ENCODE measurements at regions of chr5 and their contacts with region 1.

Region 1: DNA sequence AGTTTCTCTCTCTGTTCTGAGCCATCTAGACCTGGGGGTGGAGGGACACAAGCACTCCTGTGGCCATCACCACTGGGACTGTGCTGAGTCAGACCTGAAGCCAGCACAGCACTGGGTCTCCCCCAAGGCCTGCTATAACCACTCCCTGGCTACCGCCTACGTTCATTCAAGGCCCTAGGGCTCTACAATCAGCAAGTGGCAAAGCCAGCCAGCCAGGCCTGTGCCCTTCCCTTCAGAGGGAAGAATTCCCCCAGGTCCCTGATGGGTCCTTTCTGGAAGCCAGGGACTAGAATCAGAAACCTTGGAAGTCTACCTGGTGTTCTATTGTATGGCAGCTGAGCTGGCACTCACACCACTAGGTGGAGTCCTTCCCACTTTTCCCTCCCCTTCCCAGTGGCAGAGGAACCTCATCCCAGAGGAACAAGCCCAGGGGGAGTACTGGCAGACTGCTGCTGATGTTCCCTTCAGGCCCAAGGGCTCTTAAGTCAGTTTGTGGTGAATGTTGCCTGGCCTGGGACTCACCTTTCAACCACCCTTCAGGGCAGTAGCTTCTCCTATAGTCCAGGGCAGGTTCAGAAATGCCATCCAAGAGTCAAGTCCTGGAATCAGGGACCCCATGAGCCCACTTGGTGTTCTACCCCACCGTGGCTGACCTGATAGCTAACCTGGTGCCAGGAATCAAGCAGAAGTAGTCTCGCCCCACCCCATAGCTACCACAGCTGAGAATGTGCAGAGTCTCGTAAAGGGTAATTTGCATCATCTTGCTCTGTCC is 20.0 kb downstream of the JMY start:
- DNase-seq: peak; percentile 45
- ATAC-seq: peak; percentile 95
- H3K4me3 ChIP-seq: no peak overlapping the region
- H3K27ac ChIP-seq: no peak overlapping the region
- H3K4me1 ChIP-seq: peaks cover 35% of the 10 kb centered on the region
- H3K27me3 ChIP-seq: no peaks in the 10 kb centered on the region
- CTCF ChIP-seq: peak; percentile 88
- EP300 ChIP-seq: no peak
- POLR2A ChIP-seq: no peak
- RAD21 ChIP-seq: no peak

Region 2: GRCh38 chr5:79333852-79334557 is 78.0 kb after region 1 on chr5:
- CTCF ChIA-PET with region 1: no interaction called
- POLR2A ChIA-PET with region 1: no interaction called
- in situ Hi-C with region 1: no loop called
- intact Hi-C with region 1: loop called (anchors 5 kb)
- DNase-seq: peak; percentile 10
- ATAC-seq: peak; percentile 95
- H3K4me3 ChIP-seq: peak overlapping the region in 1 of 3 experiments; percentile 26; a peak in 2 of 6 replicates
- H3K27ac ChIP-seq: no peak overlapping the region
- H3K4me1 ChIP-seq: peaks cover 8% of the 10 kb centered on the region
- H3K27me3 ChIP-seq: no peaks in the 10 kb centered on the region
- CTCF ChIP-seq: peak; percentile 43
- EP300 ChIP-seq: no peak
- POLR2A ChIP-seq: no peak
- RAD21 ChIP-seq: 0 out of 2 replicates have a peak, but pooled peaks have one; percentile 20

Region 3: DNA sequence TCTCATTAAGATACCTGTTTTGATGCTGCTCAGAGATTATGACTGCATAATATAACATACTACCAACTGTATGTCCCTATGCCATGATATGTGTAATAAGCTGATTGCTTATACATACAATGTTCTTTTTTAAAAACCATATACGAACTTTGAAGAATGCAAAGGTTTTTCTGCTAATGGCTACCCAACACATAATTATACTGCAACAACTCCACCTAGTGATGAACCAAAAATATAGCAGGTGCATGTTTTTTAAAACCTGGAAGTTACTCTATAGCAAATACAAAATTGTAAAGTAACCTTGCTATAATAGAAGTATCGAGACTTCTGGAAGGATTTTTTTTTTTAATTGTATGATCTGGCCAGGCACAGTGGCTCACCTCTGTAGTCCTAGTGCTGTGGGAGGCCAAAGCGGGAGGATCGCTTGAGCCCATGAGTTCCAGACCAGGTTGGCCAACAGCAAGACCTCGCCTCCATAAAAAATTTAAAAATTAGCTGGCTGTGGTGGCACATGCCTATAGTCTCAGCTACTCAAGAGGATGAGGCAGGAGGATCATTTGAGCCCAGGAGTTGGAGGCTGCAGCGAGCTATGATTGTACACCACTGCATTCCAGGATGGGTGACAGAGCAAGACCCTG is 208.8 kb after region 1 on chr5:
- CTCF ChIA-PET with region 1: interaction called, 4 read pairs
- POLR2A ChIA-PET with region 1: no interaction called
- in situ Hi-C with region 1: loop called (anchors 25 kb)
- intact Hi-C with region 1: loop called (anchors 5 kb)
- DNase-seq: no peak
- ATAC-seq: no peak
- H3K4me3 ChIP-seq: no peak overlapping the region
- H3K27ac ChIP-seq: no peak overlapping the region
- H3K4me1 ChIP-seq: no peaks in the 10 kb centered on the region
- H3K27me3 ChIP-seq: no peaks in the 10 kb centered on the region
- CTCF ChIP-seq: peak; percentile 61
- EP300 ChIP-seq: no peak
- POLR2A ChIP-seq: no peak
- RAD21 ChIP-seq: no peak

Measured in HepG2 (cell line).